Mammary epithelial cell (primary cell): ENCODE measurements at regions of chr1 and their contacts with region 1.

Region 1: DNA sequence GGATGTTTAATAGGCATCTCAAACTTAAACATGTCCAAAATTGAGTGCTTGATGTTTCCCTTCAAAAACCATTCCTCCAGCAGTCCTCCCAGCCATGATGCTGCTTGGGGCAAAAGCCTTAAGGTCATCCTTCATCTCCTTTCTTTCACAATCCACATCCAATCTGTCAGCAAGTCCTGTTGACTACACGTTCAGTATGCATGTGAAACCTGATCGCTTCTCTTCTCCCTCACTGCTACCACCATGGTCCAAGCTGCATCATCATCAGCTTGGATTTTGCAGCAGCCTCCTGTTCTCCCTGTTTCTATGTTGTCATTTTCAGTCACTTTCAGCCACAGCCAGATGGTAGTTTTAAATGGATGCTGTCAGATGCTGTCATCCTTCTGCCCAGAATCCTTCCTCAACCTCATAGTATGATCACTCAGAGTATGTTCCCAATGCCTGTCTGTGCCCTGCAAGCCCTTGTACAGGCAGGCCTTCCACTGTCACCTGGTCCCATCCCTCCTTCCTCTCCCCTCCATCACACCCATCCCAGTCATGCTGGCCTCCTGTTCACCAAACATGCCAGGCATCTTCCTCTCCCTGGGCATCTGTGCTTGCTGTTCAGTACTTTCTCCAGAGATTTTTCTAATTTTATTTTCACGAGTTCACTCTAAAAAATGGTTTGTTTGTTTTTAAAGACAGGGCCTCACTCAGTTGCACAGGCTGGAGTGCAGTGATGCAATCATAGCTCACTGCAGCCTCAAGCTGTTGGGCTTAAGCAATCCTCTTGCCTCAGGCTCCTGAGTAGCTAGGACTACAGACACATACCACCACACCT is 66.0 kb downstream of the SYDE2 start:
- DNase-seq: peak; percentile 60
- H3K4me3 ChIP-seq: no peak overlapping the region
- H3K27ac ChIP-seq: no peak overlapping the region
- H3K4me1 ChIP-seq: peaks cover 5% of the 10 kb centered on the region
- H3K27me3 ChIP-seq: no peaks in the 10 kb centered on the region
- CTCF ChIP-seq: no peak

Region 2: GRCh38 chr1:85230305-85230980 is 95.7 kb after region 1 on chr1:
- CTCF ChIA-PET with region 1: no interaction called
- dilution Hi-C with region 1: loop called (anchors 10 kb)
- in situ Hi-C with region 1: no loop called
- intact Hi-C with region 1: no loop called
- DNase-seq: no peak
- H3K4me3 ChIP-seq: no peak overlapping the region
- H3K27ac ChIP-seq: no peak overlapping the region
- H3K4me1 ChIP-seq: peaks cover 8% of the 10 kb centered on the region
- H3K27me3 ChIP-seq: no peaks in the 10 kb centered on the region
- CTCF ChIP-seq: peak; percentile 3 to 32

Region 3: DNA sequence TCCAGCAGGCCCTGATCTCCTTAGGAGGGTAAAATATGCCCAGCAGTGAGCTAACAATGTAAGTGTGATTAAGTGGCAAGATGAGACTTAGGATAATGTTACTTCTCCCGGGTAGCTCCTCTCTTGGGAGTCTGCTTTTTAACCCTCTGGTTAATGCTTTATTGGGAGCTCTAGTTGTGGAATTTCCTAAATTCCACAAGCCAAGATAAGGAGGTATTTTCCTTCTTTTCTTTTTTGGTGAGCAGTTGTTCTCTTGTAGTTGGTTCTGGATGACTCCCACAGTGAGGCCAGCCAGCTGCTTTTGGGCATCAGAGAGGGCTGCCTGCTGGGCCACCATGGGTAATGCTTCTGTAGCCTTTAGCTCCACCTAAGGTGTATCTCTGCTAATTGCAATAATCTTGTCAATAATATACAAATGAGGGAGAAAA is 105.4 kb after region 1 on chr1:
- CTCF ChIA-PET with region 1: no interaction called
- dilution Hi-C with region 1: loop called (anchors 10 kb)
- in situ Hi-C with region 1: loop called in 1 of 2 experiments (anchors 10 kb)
- intact Hi-C with region 1: no loop called
- DNase-seq: no peak
- H3K4me3 ChIP-seq: no peak overlapping the region
- H3K27ac ChIP-seq: no peak overlapping the region
- H3K4me1 ChIP-seq: peaks cover 9% of the 10 kb centered on the region
- H3K27me3 ChIP-seq: no peaks in the 10 kb centered on the region
- CTCF ChIP-seq: peak; percentile 24 to 55